Endothelial cell of umbilical vein (primary cell): ENCODE measurements at regions of chr18 and their contacts with region 1.

Region 1: GRCh38 chr18:31819106-31819924 is 58.6 kb upstream of the SLC25A52 start:
- DNase-seq: peak; percentile 52
- H3K4me3 ChIP-seq: no peak overlapping the region
- H3K27ac ChIP-seq: no peak overlapping the region
- H3K4me1 ChIP-seq: no peaks in the 10 kb centered on the region
- H3K27me3 ChIP-seq: peaks cover 4 to 7% of the 10 kb centered on the region in 2 experiments
- CTCF ChIP-seq: peak; percentile 51 to 64
- POLR2A ChIP-seq: no peak

Region 2: DNA sequence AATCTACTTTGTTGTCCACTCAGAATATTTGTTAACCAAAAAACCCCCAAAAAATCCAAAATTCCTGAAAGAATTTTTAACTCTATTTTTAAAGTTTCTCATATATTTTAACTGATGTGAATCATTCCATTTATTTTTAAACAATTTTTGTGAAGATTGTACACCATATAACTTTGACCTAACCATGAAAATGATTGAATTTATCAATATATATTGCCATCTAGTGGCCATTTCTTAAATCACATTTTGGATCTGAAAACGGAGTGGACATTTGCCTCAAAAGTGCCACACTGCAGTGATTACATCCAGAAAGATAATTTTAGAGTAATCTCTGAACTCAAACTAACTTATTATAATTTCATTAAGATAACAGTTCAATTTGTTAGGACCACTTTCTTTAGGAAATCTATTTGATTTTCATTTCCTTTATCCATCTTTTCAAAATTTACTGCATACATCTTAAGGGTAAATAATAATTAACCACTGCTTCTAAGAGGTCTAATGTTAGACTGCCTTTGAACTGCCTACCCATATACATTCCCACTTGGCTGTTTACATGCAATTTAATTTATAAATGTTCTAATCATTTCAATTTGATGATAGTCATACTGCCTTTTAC is 847.9 kb before region 1 on chr18:
- CTCF ChIA-PET with region 1: no interaction called
- POLR2A ChIA-PET with region 1: no interaction called
- dilution Hi-C with region 1: no loop called
- intact Hi-C with region 1: loop called (anchors 5 kb)
- DNase-seq: peak; percentile 37
- H3K4me3 ChIP-seq: no peak overlapping the region
- H3K27ac ChIP-seq: no peak overlapping the region
- H3K4me1 ChIP-seq: no peaks in the 10 kb centered on the region
- H3K27me3 ChIP-seq: no peaks in the 10 kb centered on the region
- CTCF ChIP-seq: peak in 1 of 2 donors; percentile 31
- POLR2A ChIP-seq: no peak

Region 3: GRCh38 chr18:31741097-31741735 is 78.1 kb before region 1 on chr18:
- CTCF ChIA-PET with region 1: interaction called, 6 read pairs
- POLR2A ChIA-PET with region 1: no interaction called
- dilution Hi-C with region 1: no loop called
- intact Hi-C with region 1: loop called (anchors 5 kb)
- DNase-seq: peak; percentile 44
- H3K4me3 ChIP-seq: no peak overlapping the region
- H3K27ac ChIP-seq: no peak overlapping the region
- H3K4me1 ChIP-seq: no peaks in the 10 kb centered on the region
- H3K27me3 ChIP-seq: no peaks in the 10 kb centered on the region
- CTCF ChIP-seq: peak; percentile 60 to 66
- POLR2A ChIP-seq: no peak

Region 4: DNA sequence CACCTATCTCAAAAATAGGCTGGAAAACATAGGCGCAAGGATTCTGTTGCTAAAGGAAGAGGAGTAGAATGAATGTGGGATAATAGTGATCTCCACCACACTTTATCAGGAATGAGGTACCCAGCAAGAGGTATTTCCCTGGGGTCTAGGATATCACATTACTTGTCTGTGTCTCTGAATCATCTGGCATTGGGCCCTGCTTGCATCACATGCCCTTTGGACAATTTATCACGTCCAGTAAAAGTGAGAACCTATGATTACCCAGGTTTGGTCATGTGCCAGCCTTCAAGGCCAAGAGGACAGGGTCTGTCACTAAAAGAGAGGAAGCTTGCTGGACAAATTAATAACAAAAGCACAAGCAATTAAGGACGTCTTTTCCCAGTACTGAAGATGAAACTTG is 135.0 kb after region 1 on chr18:
- CTCF ChIA-PET with region 1: interaction called, 3 read pairs
- POLR2A ChIA-PET with region 1: no interaction called
- dilution Hi-C with region 1: no loop called
- intact Hi-C with region 1: loop called (anchors 1 kb)
- DNase-seq: no peak
- H3K4me3 ChIP-seq: no peak overlapping the region
- H3K27ac ChIP-seq: no peak overlapping the region
- H3K4me1 ChIP-seq: no peaks in the 10 kb centered on the region
- H3K27me3 ChIP-seq: no peaks in the 10 kb centered on the region
- CTCF ChIP-seq: no peak
- POLR2A ChIP-seq: no peak

Region 5: DNA sequence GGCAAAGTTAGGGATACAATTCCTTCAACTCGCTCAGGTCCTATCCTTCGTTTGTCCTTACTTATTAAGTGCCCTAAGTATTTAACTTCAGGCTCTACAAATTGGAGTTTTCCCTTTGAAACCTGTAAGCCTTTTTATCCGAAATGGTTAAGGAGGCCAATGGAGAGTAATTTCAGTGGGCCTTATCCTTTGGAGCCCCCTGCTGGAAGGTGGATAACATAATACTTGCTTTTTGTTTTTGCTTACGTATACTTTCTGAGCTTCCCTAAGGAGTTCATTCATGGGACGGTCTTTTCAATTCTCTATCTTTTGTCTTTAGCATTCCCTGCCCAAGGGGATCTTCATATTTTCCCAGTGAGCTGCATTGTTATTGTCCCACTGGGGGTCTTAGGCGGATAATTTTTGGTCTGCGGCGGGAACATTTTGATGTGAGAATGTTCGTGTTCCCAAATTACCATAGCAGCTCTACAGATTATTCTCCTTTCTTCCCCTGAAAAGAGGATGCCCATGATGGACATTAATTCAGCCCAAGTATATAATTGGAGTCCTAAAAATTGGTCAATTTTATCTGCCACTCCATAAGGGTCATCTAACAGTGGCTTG is 158.1 kb after region 1 on chr18:
- CTCF ChIA-PET with region 1: interaction called, 15 read pairs
- POLR2A ChIA-PET with region 1: no interaction called
- dilution Hi-C with region 1: no loop called
- intact Hi-C with region 1: loop called (anchors 1 kb)
- DNase-seq: peak; percentile 48
- H3K4me3 ChIP-seq: no peak overlapping the region
- H3K27ac ChIP-seq: no peak overlapping the region
- H3K4me1 ChIP-seq: peaks cover 3% of the 10 kb centered on the region
- H3K27me3 ChIP-seq: peaks cover 0 to 5% of the 10 kb centered on the region in 2 experiments
- CTCF ChIP-seq: peak; percentile 55 to 59
- POLR2A ChIP-seq: no peak

Region 6: DNA sequence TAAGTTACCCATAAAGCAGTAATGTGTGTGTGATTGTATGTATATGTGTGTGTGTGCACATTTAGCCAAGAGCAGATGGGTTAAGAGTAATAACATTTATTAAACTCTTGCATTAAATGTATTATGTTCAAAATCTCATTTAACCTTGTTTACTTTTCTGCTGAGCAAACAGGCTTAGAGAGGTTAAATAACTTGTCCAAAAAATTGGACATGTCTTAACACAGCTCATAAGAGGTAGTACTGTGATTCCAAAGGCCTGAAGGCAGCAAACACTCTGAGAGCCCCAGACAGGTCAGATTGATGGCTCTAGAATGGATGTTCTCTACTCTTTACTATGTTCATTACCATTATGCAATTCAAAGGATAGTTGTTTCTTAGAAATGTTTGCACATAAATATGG is 773.0 kb after region 1 on chr18:
- CTCF ChIA-PET with region 1: no interaction called
- POLR2A ChIA-PET with region 1: no interaction called
- dilution Hi-C with region 1: no loop called
- intact Hi-C with region 1: no loop called
- DNase-seq: no peak
- H3K4me3 ChIP-seq: no peak overlapping the region
- H3K27ac ChIP-seq: no peak overlapping the region
- H3K4me1 ChIP-seq: no peaks in the 10 kb centered on the region
- H3K27me3 ChIP-seq: no peaks in the 10 kb centered on the region
- CTCF ChIP-seq: no peak
- POLR2A ChIP-seq: no peak